ENCODE measurements at regions of chr1 and their contacts with region 1.

Region 1: DNA sequence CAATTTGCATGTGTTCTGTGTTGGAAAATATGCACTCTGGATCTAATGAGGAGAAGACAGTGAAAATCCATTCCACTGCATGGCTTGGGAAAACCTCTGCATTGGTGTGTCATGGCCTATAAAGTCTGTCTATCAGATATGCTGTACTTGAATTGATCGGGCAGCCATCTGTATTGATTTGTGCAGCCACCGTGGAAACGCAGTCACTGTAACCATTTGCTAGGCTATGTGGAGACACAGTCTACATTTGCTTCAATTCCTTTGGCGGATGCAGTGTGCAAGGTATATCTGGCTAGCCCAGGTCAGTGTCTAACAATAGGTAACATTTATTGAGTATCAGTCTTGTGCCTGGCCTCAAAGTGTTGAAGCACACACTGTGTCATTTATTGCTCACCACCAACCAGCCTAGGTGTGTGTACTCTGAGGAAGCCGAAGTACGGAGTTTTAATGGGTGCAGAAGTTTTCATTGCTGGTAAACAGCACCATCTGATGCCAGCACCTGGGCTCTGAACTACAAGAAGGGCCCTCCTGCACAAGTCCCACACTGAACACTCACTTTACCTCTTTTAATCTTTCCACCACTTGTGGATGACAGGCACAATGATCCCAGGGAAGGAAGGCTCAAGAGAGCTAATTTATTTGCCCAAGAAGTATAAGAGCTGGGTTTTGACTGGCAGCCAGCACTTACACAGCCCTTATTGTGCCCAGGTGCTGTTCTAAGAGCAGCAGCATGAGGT is 83.4 kb downstream of the DAB1 start:
- DNase-seq: no peak
- ATAC-seq: no peak

Region 2: DNA sequence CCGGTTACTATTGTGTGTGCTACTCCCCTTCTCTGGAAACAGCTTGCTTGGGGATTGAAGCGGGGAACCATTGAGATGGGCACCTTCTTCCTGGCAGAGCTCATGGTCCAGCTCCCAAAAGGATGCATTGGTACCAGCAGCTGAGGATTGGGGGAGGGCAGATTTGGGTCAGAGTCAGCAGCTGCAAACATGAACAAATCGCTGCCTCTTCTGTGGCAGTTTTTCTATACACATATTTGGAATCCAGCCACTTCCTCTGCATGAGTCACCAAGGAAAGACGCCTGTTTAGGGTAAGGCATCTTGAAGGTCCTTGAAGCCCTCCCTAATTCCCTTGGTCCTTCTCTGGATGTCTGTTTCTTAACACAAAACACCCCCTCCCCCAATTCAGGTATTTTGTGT is 21.3 kb before region 1 on chr1:
- intact Hi-C with region 1: no loop called
- DNase-seq: no peak
- ATAC-seq: no peak

Region 3: DNA sequence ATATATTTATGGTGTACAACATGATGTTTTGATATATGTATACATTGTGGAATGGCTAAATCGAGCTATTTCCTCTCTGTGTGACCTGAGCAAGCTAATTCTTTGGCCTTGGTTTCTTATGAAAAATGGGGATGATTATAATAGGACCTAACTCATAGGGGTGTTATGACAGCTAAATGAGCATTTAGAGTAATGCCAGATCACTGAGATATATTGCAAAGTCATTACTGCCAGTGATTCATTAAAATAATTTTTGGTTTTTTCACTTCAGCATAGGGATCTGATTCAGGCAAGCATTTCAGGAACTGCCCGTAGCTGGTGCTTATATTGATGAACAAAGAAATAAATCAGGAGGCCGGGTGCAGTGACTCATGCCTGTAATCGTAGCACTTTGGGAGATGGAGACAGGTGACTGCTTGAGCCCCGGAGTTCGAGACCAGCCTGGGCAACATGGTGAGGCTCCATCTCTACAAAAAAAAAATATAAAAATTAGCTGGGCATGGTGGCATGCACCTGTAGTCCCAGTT is 52.6 kb after region 1 on chr1:
- intact Hi-C with region 1: no loop called
- DNase-seq: no peak
- ATAC-seq: no peak

Region 4: DNA sequence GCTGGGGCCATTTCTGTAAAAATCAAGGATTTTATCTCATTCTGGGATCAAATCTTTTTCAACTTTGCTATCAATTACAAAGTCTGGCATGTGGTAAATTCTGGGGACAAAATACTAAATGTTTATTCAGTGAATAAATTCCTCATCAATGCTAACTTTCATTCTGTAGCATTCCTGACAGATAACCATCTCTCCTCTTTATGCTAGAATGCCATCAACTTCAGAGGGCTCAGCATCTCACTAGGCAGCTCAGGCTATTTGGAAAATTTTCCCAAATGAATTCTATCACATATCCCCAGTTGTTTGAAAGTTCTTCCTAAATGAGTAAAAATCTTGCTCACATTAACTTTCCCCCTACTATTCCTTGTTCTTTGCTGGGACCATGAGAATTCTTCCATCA is 246.3 kb after region 1 on chr1:
- intact Hi-C with region 1: loop called (anchors 5 kb)
- DNase-seq: no peak
- ATAC-seq: no peak

Measured in sciatic nerve (tissue), 2 donors.